Mammary epithelial cell (primary cell): ENCODE measurements at regions of chr1 and their contacts with region 1.

Region 1: DNA sequence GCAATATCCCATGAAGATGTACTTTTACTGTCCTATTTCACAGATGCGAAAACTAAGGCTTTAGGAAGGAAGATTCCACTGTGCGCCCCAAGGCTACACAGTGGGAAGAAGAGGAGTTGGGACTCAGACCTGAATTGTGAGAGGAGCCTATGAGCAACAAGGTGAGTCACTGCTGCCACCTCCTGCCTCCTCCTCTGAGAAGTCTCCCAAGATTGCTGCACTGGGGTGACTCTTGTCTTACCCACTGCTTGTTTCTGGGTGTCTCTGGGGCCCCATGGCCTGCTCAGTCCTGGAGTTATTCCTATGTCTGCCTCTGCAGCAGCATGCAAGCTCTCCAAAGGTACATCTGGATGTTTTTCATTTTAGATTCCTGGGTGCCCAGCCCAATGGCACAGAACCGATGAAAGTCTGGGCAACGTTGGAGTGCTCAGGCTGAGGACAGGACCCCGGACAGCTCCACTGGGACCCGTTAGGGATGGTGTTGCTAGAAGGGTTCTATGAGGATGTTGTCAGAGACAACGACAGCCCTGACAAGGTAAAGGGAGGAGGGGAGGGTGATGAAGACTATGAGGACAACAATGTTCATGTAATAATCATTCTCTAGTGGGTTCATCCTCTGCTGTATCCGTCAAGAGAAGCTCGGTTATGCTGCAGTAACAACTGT is 11.0 kb upstream of the C1QA start:
- DNase-seq: peak; percentile 4
- H3K4me3 ChIP-seq: no peak overlapping the region
- H3K27ac ChIP-seq: no peak overlapping the region
- H3K4me1 ChIP-seq: no peaks in the 10 kb centered on the region
- H3K27me3 ChIP-seq: peaks cover 7% of the 10 kb centered on the region
- CTCF ChIP-seq: no peak

Region 2: GRCh38 chr1:22442212-22442882 is 183.0 kb before region 1 on chr1:
- CTCF ChIA-PET with region 1: no interaction called
- dilution Hi-C with region 1: no loop called
- in situ Hi-C with region 1: no loop called
- intact Hi-C with region 1: loop called (anchors 5 kb)
- DNase-seq: no peak
- H3K4me3 ChIP-seq: no peak overlapping the region
- H3K27ac ChIP-seq: no peak overlapping the region
- H3K4me1 ChIP-seq: no peaks in the 10 kb centered on the region
- H3K27me3 ChIP-seq: no peaks in the 10 kb centered on the region
- CTCF ChIP-seq: no peak